ENCODE measurements at regions of chr19 and their contacts with region 1.

Region 1: GRCh38 chr19:17282488-17283255 is 971 bp downstream of the ANKLE1 start:
- DNase-seq: peak in 1 of 2 experiments; percentile 97
- H3K4me3 ChIP-seq: peak overlapping the region; percentile 3 to 54 (median 20); a peak in 7 of 8 replicates
- H3K27ac ChIP-seq: no peak overlapping the region
- H3K4me1 ChIP-seq: peaks cover 0 to 3% (median under 1%) of the 10 kb centered on the region in 4 experiments; a peak in 3 of 7 replicates
- H3K27me3 ChIP-seq: peaks cover 0 to 3% (median 0%) of the 10 kb centered on the region in 4 experiments; a peak in 3 of 7 replicates
- CTCF ChIP-seq: peak; percentile 88 to 96 (median 92)
- EP300 ChIP-seq: no peak
- POLR2A ChIP-seq: no peak; a peak in 1 of 3 replicates
- RAD21 ChIP-seq: peak; percentile 87 to 88

Region 2: DNA sequence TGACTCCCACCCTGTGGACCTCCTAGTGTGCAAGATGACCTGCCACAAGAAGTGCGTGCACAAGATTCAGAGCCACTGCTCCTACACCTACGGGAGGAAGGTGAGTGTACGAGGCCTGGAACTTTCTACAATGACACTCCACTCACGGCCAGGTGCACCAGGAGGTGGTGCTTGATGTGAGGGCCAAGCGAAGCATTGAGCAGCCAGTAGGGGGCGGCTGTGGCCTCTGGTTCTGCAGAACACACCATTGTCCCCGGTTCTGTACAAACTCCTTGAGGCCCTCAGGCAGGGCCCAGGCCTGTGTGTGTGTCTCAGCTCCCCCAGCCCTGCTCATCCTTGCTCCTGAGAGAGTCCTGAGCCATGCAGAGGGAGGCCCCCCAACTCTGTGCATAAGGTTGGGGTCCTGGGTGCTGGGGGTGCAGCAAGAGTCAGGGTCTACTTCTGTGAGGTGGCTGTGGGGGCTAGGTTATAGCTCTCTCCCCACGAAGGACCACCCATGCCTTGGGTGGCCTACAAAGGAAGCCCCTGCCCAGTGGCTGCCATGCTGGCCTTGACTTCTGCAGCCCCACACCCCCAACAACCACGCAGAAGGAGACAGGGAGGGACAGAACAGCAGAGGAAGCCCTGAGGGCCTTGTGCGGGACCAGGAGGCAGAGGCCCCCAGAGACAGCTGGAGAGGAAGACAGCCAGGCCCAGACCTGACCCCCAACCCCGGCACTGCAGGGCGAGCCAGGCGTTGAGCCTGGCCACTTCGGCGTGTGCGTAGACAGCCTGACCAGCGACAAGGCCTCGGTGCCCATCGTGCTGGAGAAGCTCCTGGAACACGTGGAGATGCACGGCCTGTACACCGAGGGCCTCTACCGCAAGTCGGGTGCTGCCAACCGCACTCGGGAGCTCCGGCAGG is 77.2 kb before region 1 on chr19:
- CTCF ChIA-PET with region 1: interaction called, 36 read pairs
- POLR2A ChIA-PET with region 1: interaction called, 6 read pairs
- DNase-seq: peak; percentile 54 to 80
- H3K4me3 ChIP-seq: no peak overlapping the region
- H3K27ac ChIP-seq: no peak overlapping the region
- H3K4me1 ChIP-seq: peaks cover 0 to 13% (median 7%) of the 10 kb centered on the region in 4 experiments; a peak in 5 of 7 replicates
- H3K27me3 ChIP-seq: no peaks in the 10 kb centered on the region
- CTCF ChIP-seq: peak; percentile 95 to 96 (median 96)
- EP300 ChIP-seq: no peak
- POLR2A ChIP-seq: no peak
- RAD21 ChIP-seq: peak; percentile 78 to 85

Region 3: GRCh38 chr19:17226002-17226933 is 56.4 kb before region 1 on chr19 and contains the start of gene OCEL1:
- CTCF ChIA-PET with region 1: interaction called, 23 read pairs
- POLR2A ChIA-PET with region 1: interaction called, 25 read pairs
- DNase-seq: peak; percentile 89 to 96
- H3K4me3 ChIP-seq: peak within 1 kb of the TSS; percentile 52 to 80 (median 65)
- H3K27ac ChIP-seq: peak within 1 kb of the TSS; percentile 84; the same call in 1 of the 2 replicates
- H3K4me1 ChIP-seq: peaks cover 0 to 4% (median 3%) of the 10 kb centered on the region in 4 experiments; a peak in 6 of 7 replicates
- H3K27me3 ChIP-seq: no peaks in the 10 kb centered on the region
- CTCF ChIP-seq: no peak
- EP300 ChIP-seq: no peak
- POLR2A ChIP-seq: peak; percentile 50 to 86
- RAD21 ChIP-seq: no peak
- total RNA-seq, gene OCEL1: 32.1 and 32.6 TPM in 2 replicates

Region 4: DNA sequence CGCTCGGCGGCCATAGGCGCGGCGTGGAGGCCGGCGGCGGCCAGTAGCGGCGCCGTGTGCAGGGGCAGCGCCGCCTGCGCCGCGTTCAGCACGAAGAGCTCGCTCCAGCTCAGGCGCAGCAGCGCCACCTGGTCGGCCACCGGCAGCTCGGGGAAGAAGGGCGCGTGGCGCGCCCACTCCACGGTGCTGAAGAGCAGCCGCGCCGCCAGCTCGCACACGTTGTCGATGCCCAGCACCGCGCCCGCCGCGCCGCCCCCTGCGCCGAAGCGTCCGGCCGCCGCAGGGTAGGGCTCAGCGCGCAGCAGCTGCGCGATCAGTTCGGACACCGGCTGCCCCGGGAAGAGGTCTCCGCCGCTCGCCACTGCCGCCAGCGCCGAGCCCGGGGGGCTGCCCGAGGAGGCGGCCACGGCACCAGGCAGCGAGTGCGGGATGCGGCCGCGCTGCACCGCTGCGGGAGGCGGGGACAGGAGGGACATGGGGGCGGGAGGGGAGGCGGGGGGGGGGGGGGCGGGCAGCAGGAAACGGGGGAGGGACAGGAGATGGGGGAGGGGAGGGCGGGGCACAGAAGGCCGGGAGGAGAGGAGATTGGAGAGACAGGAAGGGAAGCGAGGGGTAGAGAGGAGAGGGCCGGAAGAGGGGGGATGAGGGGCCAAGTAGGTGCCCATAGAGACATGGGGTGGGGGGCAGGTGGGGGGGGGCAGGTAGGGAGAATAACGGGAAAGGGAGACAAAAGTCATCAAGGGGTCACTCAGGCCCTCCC is 46.9 kb before region 1 on chr19:
- CTCF ChIA-PET with region 1: interaction called, 10 read pairs
- POLR2A ChIA-PET with region 1: interaction called, 9 read pairs
- DNase-seq: peak in 1 of 2 experiments; percentile 80
- H3K4me3 ChIP-seq: peak overlapping the region; percentile 80 to 89 (median 86)
- H3K27ac ChIP-seq: peak overlapping the region; percentile 64; the same call in 1 of the 2 replicates
- H3K4me1 ChIP-seq: peaks cover 3 to 11% (median 7%) of the 10 kb centered on the region in 4 experiments
- H3K27me3 ChIP-seq: no peaks in the 10 kb centered on the region
- CTCF ChIP-seq: peak; percentile 32 to 51 (median 45)
- EP300 ChIP-seq: no peak
- POLR2A ChIP-seq: no peak; a peak in 1 of 3 replicates
- RAD21 ChIP-seq: peak; percentile 23 to 37

Region 5: DNA sequence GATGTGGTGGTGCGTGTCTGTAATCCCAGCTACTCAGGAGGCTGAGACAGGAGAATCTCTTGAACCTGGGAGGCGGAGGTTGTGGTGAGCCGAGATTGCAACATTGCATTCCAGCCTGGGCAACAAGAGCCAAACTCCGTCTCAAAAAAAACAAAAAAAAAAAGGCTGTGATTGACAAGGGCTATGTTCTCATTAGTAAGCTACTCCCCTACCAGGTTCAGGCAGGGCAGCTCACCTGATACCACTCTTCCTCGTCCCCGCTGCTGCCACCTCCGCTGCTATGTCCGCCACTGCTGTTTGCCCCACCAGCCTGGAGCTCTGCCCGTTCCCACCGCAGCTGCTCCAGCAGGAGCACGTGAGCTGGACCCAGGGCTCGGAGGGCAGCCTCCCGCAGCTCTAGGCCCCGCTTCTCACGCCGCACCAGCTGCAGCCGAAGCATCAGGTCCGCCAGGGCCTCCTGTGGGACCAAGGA is 27.5 kb before region 1 on chr19:
- CTCF ChIA-PET with region 1: interaction called, 56 read pairs
- POLR2A ChIA-PET with region 1: interaction called, 113 read pairs
- DNase-seq: no peak
- H3K4me3 ChIP-seq: no peak overlapping the region
- H3K27ac ChIP-seq: no peak overlapping the region
- H3K4me1 ChIP-seq: no peaks in the 10 kb centered on the region
- H3K27me3 ChIP-seq: no peaks in the 10 kb centered on the region
- CTCF ChIP-seq: no peak
- EP300 ChIP-seq: no peak
- POLR2A ChIP-seq: no peak
- RAD21 ChIP-seq: no peak

Region 6: DNA sequence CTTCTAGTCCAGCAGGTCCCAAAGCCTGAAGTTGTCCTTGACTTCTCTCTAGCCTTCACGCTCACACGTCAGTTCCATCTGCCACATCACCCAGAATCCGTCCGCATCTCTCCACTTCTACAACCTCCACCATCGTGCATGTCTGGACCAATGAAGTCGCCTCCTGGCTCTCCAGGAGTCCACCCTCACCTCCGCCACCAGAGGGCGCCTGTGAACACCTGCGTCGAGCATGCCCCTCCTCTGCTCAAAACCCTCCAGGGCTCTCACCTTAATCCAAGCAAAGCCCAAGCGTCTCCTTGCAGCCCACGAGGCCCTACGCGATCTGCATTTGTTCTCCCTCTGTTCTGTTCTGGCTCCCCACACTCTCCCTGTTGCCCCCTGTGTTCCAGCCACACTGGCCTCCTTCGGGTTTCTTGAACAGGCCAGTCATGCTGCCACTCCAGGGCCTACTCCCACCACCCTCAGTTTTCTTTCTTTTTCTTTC is 21.8 kb before region 1 on chr19:
- CTCF ChIA-PET with region 1: interaction called, 56 read pairs
- POLR2A ChIA-PET with region 1: interaction called, 113 read pairs
- DNase-seq: peak; percentile 90 to 95
- H3K4me3 ChIP-seq: no peak overlapping the region
- H3K27ac ChIP-seq: peak overlapping the region; percentile 60; the same call in 1 of the 2 replicates
- H3K4me1 ChIP-seq: peaks cover 0 to 5% (median 1%) of the 10 kb centered on the region in 4 experiments; a peak in 4 of 7 replicates
- H3K27me3 ChIP-seq: no peaks in the 10 kb centered on the region
- CTCF ChIP-seq: peak; percentile 81 to 98 (median 94)
- EP300 ChIP-seq: no peak
- POLR2A ChIP-seq: no peak
- RAD21 ChIP-seq: peak; percentile 53 to 71; a peak in 3 of 4 replicates

Region 7: GRCh38 chr19:17266975-17267788 is 15.5 kb before region 1 on chr19 and contains the start of gene BABAM1:
- CTCF ChIA-PET with region 1: interaction called, 56 read pairs
- POLR2A ChIA-PET with region 1: interaction called, 113 read pairs
- DNase-seq: peak; percentile 88 to 96
- H3K4me3 ChIP-seq: peak within 1 kb of the TSS; percentile 71 to 100 (median 95)
- H3K27ac ChIP-seq: peak within 1 kb of the TSS; percentile 60; the same call in 1 of the 2 replicates
- H3K4me1 ChIP-seq: peaks cover 0 to 8% (median 2%) of the 10 kb centered on the region in 4 experiments; a peak in 5 of 7 replicates
- H3K27me3 ChIP-seq: no peaks in the 10 kb centered on the region
- CTCF ChIP-seq: no peak
- EP300 ChIP-seq: no peak
- POLR2A ChIP-seq: peak; percentile 50 to 94
- RAD21 ChIP-seq: no peak
- total RNA-seq, gene BABAM1: 127 and 134 TPM in 2 replicates